Aorta (tissue), 5 donors: ENCODE measurements at regions of chrX and their contacts with region 1.

Region 1: DNA sequence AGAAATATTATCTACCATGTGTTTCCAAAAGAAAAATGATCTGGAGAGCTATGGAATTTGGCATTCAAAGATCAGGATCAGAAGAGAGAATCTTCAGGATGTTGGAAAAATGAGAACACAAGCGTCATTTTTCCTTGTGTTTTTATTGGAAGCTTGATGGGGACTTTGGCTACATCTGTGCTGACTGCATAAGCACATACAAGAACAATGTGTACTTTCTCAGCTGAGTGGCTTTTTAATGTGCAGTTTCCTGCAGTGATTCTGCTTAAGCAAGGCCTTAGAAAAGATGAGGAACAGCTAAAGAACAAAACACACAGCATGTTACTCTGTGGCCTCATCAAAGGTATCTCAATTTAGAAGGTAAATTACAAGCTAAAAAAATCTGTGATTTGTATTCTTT is 1039.9 kb downstream of the GLUD2 start:
- DNase-seq: no peak
- ATAC-seq: peak; percentile 48
- H3K4me3 ChIP-seq: no peak overlapping the region
- H3K27ac ChIP-seq: no peak overlapping the region
- H3K4me1 ChIP-seq: no peaks in the 10 kb centered on the region
- H3K27me3 ChIP-seq: no peaks in the 10 kb centered on the region

Region 2: DNA sequence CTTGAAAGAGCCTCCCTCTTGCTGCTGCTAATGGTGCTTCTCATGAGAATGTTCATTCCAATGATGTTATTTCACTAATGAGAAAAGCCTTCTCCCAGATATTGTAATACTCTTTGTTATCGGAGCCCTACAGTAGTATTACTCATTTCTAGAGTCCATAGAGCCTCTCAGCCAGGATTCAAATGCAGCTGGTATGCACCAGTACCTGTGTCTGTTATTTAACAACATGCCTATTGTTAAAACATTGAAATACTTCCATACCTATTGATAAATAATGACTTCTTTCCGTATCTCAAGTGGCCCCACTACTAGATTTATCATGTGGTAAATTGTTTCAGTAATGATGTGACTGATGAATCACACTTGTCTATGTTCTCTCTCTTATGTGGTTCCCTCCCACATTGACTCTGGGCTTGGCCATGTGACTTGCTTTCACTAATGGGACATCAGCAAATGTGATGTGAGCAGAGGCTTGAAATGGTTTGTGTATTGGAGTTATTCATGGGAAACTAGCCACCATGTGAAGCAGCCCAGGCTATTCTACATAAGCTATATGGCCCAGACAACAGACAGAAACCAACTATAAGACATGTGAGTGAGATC is 1437.9 kb after region 1 on chrX:
- intact Hi-C with region 1: loop called in 1 of 2 experiments (anchors 10 kb)
- DNase-seq: no peak
- ATAC-seq: no peak
- H3K4me3 ChIP-seq: no peak overlapping the region
- H3K27ac ChIP-seq: no peak overlapping the region
- H3K4me1 ChIP-seq: no peaks in the 10 kb centered on the region
- H3K27me3 ChIP-seq: no peaks in the 10 kb centered on the region